ENCODE measurements at regions of chr15 and their contacts with region 1.

Region 1: DNA sequence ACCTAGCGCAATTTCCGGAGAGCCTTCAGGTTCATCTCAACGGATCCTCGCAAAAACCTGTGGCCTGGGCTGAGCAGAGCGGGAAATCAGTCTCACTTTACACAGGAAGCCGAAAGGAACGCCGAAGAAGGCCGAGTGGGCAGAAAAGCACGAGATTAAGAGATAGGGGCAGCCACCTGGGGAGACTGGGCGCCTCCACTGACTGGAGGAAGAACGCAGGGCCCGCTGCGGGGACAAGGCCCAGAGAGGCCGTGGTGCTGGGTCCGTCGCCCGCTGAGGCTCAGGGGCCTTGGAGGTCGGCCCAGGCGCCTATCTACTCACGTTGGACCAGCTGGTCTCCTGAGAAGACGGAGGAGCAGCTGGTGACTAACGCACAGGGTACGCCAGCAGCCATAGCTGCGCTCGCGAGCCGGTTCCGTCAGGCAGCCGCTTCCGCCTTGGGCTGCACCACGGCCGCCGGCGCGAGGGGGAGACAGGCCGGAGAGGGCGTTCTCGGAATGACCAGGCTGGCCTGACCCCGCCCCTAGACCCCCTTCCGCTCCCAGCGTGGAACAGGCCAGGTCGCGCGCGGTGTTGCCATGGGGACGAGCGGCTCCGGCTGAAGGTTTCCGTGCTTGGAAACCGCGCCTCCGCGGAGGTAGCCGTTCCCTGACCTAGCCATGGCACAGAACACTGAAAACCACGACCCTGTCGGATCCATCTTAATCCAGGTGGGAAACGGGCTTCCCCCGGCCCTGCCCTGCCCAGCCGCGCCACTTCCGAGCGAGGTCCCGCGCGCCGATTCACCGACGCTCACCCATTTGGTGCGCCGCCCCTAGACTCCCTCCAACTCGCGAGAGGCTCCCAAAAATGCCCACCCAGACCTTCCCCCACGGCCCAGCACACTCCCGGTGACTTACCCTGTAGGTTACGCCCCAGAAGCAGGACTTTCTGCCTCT is at the starts of genes AAGAB and IQCH:
- H3K4me3 Mint-ChIP-seq: peak within 1 kb of the TSS; percentile 97
- H3K27ac Mint-ChIP-seq: peak within 1 kb of the TSS; percentile 88
- H3K4me1 Mint-ChIP-seq: peaks cover 25% of the 10 kb centered on the region
- H3K27me3 Mint-ChIP-seq: peaks cover 10% of the 10 kb centered on the region

Region 2: GRCh38 chr15:66968806-66969596 is 285.5 kb before region 1 on chr15:
- intact Hi-C with region 1: no loop called
- H3K4me3 Mint-ChIP-seq: no peak overlapping the region
- H3K27ac Mint-ChIP-seq: no peak overlapping the region
- H3K4me1 Mint-ChIP-seq: peaks cover 20% of the 10 kb centered on the region
- H3K27me3 Mint-ChIP-seq: peaks cover 46% of the 10 kb centered on the region

Region 3: DNA sequence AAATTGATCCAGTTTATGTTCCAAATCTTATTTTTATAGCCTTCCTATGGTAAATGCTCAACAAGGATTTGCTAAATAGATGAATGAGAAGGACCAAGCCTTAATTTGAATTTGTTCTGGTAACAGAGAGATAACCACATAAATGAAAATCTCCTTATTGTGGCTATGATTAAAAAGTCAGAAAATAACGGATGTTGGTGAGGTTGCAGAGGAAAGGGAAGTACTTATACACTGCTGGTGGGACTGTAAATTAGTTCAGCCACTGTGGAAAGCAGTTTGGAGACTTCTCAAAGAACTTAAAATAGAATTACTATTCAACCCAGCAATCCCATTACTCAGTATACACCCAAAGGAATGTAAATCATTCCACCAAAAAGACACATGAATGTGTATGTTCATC is 26.2 kb before region 1 on chr15:
- intact Hi-C with region 1: no loop called
- H3K4me3 Mint-ChIP-seq: no peak overlapping the region
- H3K27ac Mint-ChIP-seq: no peak overlapping the region
- H3K4me1 Mint-ChIP-seq: peaks cover 5% of the 10 kb centered on the region
- H3K27me3 Mint-ChIP-seq: no peaks in the 10 kb centered on the region

Region 4: DNA sequence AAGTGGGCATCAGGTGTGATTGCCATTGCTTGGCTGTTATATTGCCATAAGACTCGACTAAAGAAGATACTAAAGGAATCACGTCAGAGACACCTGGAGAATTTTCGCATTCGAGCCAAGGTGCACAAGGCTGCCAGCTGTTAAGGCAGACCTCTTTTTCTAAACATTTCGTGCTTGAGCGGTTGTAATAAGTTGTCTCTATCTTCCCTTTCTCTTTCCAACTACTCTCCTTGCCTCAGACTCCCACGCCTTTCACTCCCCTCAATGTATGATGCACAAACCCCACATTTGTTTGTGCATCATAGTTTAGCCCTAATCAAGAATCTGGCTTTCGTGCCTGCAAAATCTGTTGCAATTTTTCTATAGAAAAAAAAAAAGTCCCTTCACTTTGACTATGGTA is 118.0 kb after region 1 on chr15:
- intact Hi-C with region 1: no loop called
- H3K4me3 Mint-ChIP-seq: no peak overlapping the region
- H3K27ac Mint-ChIP-seq: no peak overlapping the region
- H3K4me1 Mint-ChIP-seq: no peaks in the 10 kb centered on the region
- H3K27me3 Mint-ChIP-seq: no peaks in the 10 kb centered on the region

Region 5: DNA sequence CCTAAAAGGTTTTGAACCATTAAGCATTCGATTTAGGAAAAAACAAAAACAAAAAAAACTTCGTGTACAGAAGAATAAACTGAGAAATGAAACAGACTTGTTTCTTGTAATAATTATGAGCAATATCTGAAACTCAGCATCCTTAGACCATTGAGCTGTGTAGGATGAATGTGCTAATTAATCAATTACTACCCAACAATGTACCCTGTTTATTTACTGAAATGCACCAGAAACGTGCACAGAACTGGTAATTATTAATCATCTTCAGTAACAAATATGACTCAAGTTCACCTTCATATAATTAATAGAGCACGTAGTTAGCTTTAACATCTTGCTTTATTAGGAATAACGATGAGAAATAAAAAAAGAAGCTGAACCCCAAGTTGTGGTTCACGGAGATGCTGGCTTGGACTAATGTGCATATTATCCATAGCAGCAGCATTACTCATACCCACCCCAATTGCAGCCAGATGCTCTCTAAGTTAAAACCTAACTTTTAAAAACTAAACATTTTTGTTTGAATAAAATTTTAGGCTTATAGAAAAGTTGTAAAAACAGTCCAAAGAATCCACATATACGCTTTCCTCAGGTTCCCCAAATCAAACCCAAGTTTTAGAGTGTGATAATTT is 256.2 kb after region 1 on chr15:
- intact Hi-C with region 1: loop called (anchors 10 kb)
- H3K4me3 Mint-ChIP-seq: no peak overlapping the region
- H3K27ac Mint-ChIP-seq: no peak overlapping the region
- H3K4me1 Mint-ChIP-seq: peaks cover 24% of the 10 kb centered on the region
- H3K27me3 Mint-ChIP-seq: no peaks in the 10 kb centered on the region